ENCODE measurements at regions of chr6 and their contacts with region 1.

Region 1: DNA sequence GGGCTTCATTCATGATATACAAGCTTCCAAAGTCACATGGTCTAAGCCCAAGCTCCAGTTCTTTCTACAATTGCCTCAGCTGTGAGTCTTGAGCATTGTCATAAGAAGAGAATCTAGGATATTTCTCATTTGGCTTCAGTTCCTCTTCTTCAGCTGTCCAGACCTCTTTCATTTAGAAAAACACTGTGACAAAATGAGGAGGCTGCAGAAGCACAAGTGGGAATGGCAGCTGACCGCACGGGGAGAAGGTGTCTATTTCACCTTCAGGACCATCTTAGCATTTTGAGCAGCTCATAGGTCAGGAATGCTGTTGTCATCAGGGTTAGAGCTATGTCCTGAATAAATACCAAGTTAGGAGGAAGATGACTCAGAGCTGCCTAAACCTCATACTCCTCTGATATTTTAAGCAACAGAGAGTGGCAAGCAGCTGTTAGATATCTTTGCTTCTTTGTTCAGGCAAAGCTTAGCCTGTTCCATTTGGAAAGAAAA is 390.1 kb upstream of the CITED2 start:
- DNase-seq: peak in 4 of 5 donors; percentile 36 to 41 (median 40)
- ATAC-seq: peak; percentile 91 to 99 (median 98)
- H3K4me3 ChIP-seq: no peak overlapping the region
- H3K27ac ChIP-seq: peak overlapping the region; percentile 43 to 89 (median 81)
- H3K4me1 ChIP-seq: peaks cover 0 to 42% (median 22%) of the 10 kb centered on the region in 12 donors
- H3K27me3 ChIP-seq: no peaks in the 10 kb centered on the region
- CTCF ChIP-seq: no peak
- POLR2A ChIP-seq: no peak

Region 2: GRCh38 chr6:138987640-138988468 is 776.7 kb before region 1 on chr6 and contains the start of gene REPS1:
- intact Hi-C with region 1: no loop called
- DNase-seq: peak; percentile 92 to 95 (median 94)
- ATAC-seq: peak; percentile 95 to 98 (median 98)
- H3K4me3 ChIP-seq: peak within 1 kb of the TSS; percentile 80 to 99 (median 90)
- H3K27ac ChIP-seq: peak within 1 kb of the TSS; percentile 80 to 96 (median 92)
- H3K4me1 ChIP-seq: peaks cover 0 to 42% (median 23%) of the 10 kb centered on the region in 12 donors
- H3K27me3 ChIP-seq: no peaks in the 10 kb centered on the region
- CTCF ChIP-seq: peak; percentile 98 to 100 (median 99)
- POLR2A ChIP-seq: peak in 1 of 2 donors; percentile 62
- total RNA-seq, gene REPS1: 35.2 to 48.2 (median 38.3) TPM

Region 3: DNA sequence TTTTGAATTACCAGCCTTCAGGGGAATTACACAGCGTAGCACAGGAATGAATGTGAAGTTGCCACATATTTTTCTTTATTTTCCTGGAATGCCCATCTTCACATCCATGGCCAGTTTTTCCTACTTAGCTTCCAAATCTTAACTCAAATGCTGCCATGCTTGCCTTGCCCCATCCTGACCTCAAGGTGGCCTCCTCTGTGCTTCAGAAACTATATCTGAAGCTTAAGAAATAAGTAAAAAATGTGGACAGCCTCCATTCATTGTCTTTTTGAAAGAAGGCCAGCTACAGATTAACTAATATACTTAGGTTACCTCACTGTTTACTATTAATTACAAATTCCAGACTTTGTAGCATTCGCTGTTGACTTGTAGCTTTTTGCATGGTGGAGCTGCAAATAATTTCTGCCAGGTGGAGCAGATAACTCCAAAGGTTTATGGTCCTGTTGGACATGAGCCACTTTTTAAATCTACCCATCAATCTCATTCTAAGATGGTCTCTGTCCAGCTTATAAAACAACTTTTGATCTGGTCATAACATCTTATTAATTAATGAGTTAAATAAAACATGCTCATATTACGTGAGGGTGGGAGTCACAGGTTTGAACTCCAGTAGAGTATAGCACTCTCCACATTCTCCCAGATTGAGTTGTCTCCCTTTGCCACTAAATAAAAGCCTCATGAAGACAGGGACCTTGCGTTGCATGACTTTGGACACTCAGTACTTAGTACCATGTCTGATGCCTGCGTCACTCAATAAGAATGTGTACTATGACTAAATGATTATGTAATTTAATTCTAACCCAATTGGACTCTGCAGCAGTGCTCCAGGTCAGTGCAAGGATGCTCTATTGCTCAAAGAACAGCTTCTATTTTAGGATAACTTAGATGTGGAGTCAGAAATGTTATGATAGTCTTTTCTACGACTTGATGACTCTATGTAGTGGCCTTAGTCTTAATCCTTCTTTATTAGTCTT is 288.5 kb after region 1 on chr6:
- intact Hi-C with region 1: loop called in 1 of 10 experiments (anchors 10 kb)
- DNase-seq: no peak
- ATAC-seq: peak; percentile 10 to 53 (median 25)
- H3K4me3 ChIP-seq: no peak overlapping the region
- H3K27ac ChIP-seq: peak overlapping the region in 3 of 12 donors; percentile 6 to 32 (median 12)
- H3K4me1 ChIP-seq: peaks cover 0 to 14% (median 0%) of the 10 kb centered on the region in 12 donors
- H3K27me3 ChIP-seq: no peaks in the 10 kb centered on the region
- CTCF ChIP-seq: peak in 8 of 12 donors; percentile 6 to 44 (median 14)
- POLR2A ChIP-seq: no peak

Measured in heart left ventricle (tissue), 16 donors.